Psoas muscle (tissue), 8 donors: ENCODE measurements at regions of chr15 and their contacts with region 1.

Region 1: GRCh38 chr15:58227706-58228543 is 89.7 kb downstream of the AQP9 start:
- DNase-seq: peak; percentile 71 to 84
- ATAC-seq: peak; percentile 67 to 83 (median 71)
- H3K4me3 ChIP-seq: no peak overlapping the region
- H3K27ac ChIP-seq: peak overlapping the region; percentile 86
- H3K4me1 ChIP-seq: peaks cover 36% of the 10 kb centered on the region
- H3K27me3 ChIP-seq: no peaks in the 10 kb centered on the region
- CTCF ChIP-seq: peak; percentile 94

Region 2: DNA sequence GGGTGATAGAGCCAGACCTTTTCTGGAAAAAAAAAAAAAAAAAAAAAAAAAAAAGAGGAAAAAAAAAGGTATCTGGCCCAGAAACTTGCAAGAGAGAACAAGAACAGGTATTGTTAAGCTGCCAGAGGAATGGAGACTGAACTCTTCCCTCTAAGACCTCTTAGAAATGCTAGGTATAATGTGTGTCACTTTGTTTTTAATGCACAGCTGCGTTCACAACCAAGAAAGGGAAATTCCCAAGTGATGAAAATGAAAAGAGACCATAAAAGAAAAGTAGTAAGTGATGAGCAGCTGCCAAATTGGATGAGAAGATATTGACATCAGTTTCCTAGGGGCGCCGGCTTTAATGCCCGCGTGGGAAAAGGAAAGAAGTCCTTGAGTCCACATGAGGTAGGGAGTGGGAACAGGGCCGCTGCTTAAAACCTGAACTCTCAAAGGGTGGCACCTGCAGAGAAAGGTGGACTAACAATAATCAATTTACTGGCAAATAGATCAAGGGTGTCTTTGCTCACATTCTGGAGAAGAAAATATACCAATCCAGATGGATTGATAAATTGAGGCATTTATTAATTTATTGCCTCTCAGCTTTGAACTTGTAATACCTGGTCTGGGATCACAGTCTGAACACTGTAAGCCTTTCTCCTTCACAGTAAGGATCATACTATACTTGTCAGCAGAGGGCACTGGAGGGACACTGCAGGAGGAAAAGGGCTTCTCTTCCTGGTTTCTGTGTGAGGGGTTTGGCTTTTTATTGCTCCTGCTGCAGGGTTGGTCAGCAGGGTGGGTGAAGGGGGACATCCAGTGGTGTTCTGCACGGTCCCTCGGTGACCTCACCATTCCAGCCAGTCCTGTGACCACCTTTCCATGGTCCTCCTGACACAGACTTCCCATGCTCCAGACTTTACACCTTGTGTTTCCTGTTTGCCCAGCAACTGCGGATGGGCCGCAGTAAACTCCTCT is 41.8 kb after region 1 on chr15:
- intact Hi-C with region 1: loop called in 1 of 2 experiments (anchors 10 kb)
- DNase-seq: no peak
- ATAC-seq: peak; percentile 70 to 93 (median 86)
- H3K4me3 ChIP-seq: no peak overlapping the region
- H3K27ac ChIP-seq: no peak overlapping the region
- H3K4me1 ChIP-seq: no peaks in the 10 kb centered on the region
- H3K27me3 ChIP-seq: no peaks in the 10 kb centered on the region
- CTCF ChIP-seq: peak; percentile 63

Region 3: DNA sequence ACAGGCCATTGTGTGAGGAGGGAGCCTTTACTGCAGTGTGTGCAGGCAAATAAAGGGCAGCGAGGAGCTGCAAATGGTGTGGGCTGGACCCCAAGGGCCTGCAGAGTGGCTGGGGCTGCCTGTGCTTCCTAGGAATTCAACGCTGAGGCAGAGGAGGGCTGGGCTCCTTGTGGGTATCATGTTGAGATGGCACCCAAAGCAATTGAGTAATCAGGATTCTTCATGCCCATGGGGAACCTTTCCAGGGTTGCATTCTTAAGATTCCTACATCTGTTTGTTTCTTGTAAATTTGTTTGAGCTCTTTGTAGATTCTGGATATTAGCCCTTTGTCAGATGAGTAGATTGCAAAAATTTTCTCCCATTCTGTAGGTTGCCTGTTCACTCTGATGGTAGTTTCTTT is 118.5 kb after region 1 on chr15:
- intact Hi-C with region 1: no loop called
- DNase-seq: no peak
- ATAC-seq: no peak
- H3K4me3 ChIP-seq: no peak overlapping the region
- H3K27ac ChIP-seq: no peak overlapping the region
- H3K4me1 ChIP-seq: peaks cover 6% of the 10 kb centered on the region
- H3K27me3 ChIP-seq: no peaks in the 10 kb centered on the region
- CTCF ChIP-seq: no peak

Region 4: DNA sequence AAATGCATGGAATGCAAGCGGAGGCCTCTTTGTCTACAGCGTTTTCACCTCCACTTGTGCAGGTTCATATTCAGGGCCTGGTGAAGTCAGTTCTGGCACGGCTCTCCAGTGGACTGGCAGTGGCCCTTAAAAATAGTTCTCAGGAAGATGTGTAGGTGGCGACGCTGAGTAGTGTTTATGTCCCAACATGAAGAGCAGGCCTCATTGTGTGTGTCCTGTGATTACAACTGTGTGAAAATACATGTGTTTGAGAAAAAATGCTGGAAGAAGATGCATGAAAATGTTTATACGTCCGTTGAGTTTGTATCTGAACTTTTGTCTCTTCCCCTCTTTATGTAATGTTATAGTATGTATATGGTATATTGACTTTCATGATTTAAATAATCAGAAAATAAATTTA is 211.0 kb after region 1 on chr15:
- intact Hi-C with region 1: loop called in 1 of 2 experiments (anchors 10 kb)
- DNase-seq: no peak
- ATAC-seq: peak; percentile 60 to 84 (median 76)
- H3K4me3 ChIP-seq: no peak overlapping the region
- H3K27ac ChIP-seq: no peak overlapping the region
- H3K4me1 ChIP-seq: peaks cover 32% of the 10 kb centered on the region
- H3K27me3 ChIP-seq: no peaks in the 10 kb centered on the region
- CTCF ChIP-seq: peak; percentile 18

Region 5: DNA sequence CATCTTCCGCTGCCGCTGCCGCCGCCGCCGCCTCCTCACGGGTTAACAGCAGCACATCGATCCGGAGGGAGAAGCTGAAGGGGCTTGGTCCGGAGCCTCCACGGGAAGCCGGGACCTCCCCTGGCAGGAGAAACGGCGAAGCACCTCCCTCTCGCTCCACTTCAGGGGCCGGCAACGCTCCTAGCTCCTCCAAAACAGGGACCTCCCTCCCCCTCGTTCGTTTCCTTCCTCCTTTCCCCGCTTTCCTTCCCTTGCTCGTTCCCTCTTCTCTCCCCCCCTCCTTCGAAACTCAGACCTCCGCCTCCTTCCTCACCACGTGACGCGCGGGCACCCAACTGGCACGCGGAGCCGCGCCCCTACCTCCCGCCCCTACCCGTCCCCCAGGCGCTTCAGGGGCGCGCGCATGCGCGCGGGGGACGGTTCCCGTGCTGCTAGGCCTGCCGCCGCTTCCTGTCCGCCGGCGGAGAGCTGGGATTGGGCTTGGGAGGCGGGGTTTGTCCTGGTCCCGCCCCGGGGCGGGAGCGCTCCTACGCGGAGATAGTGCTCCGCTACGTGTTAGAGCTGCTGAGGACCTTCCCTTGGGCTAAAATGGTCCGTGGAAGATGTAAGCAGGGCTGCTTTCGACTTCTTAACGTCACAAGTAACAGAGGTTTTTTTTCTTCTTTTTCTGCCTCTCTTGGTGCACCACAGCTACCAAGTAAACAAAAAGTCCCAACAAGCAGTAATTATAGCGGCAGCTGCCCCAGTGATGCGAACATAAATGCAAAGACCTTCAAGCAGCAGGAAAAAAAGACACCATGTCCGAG is 521.8 kb after region 1 on chr15 and contains the start of gene ADAM10:
- intact Hi-C with region 1: loop called in 1 of 2 experiments (anchors 5 kb)
- DNase-seq: peak; percentile 99 to 100
- ATAC-seq: peak; percentile 97 to 99 (median 98)
- H3K4me3 ChIP-seq: peak within 1 kb of the TSS; percentile 97
- H3K27ac ChIP-seq: peak within 1 kb of the TSS; percentile 98
- H3K4me1 ChIP-seq: peaks cover 23% of the 10 kb centered on the region
- H3K27me3 ChIP-seq: no peaks in the 10 kb centered on the region
- CTCF ChIP-seq: no peak
- total RNA-seq, gene ADAM10: 33.1 to 37.9 (median 36.5) TPM

Region 6: DNA sequence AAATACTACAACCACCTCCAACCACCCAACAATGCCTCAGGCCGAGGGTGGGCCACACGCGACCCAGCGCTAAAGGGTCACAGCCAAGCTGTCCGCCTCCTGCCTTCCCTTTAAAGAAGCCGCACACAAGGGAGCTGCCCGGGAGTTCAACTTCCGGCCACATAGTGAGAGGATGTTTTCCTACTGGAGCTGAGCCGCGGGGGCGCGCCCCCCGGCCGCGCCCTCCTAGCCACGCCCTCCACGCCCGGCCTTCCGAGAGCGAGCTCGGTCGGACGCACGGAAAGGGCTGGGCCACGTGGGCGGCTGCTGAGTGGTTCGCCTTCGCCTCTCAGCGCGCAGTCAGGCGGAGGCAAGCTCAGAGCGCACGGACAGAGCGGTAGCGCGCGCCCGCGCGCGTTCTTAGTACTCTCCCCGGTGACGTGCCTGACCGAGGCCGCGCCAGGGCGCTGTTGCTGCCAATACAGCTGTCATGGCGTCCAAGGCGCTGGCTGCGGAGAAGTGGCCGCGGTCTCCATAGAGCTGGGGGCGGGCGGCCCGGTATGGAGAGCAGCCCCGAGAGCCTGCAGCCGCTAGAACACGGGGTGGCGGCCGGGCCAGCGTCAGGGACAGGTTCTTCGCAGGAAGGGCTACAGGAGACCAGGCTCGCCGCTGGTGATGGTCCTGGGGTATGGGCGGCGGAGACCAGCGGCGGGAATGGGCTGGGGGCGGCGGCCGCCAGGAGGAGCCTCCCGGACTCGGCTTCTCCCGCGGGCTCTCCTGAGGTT is 543.1 kb after region 1 on chr15 and contains the start of gene MINDY2:
- intact Hi-C with region 1: loop called (anchors 5 to 10 kb)
- DNase-seq: peak; percentile 98 to 99
- ATAC-seq: peak; percentile 97 to 99 (median 98)
- H3K4me3 ChIP-seq: peak within 1 kb of the TSS; percentile 97
- H3K27ac ChIP-seq: peak within 1 kb of the TSS; percentile 98
- H3K4me1 ChIP-seq: peaks cover 34% of the 10 kb centered on the region
- H3K27me3 ChIP-seq: no peaks in the 10 kb centered on the region
- CTCF ChIP-seq: peak; percentile 18
- total RNA-seq, gene MINDY2: 6.0 to 11.3 (median 8.5) TPM